Activated B cell treated with CpG ODN at 0.5 μM for 24 hours (primary cell): ENCODE measurements at regions of chr17 and their contacts with region 1.

Region 1: DNA sequence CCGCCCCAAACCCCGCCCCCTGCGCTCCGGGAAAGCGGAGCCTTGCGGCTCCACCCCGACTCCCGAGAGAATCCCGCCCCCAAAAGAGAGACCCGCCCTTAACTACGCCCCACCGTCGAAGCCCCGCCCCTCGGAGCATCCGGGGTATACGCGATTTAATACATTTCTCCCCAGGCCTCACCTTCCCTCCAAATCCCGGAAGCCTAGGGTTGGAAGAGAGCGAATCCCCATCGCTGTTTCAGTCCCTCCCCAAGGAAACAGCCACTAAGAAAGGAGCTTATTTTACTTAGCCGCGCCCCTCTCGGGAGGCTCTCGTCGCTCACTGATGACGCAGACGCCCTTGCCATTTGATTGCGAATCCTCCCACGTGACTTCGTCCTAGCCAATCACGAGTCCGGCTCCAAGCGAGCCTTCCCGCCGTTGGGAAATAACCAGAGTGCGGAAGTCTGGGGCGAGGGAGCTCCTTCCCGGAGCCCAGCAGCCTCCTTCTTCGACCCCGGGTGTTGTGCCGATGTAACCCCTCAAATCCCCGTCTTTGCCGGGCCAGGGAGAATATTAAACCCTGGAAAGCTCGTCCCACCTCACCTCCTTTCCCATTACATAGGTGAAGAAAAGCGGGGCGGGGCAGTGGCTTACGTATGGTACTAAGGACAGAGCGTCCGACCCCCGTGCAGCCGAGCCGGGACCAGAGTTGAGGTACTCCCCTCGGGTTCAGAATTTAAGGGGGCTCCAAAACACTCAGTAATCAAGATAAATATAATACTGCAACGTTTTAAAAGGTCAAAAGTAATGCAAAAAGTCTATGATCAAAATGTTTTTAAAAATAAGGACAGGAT is 462 bp upstream of the FDXR start:
- DNase-seq: peak; percentile 94
- ATAC-seq: peak; percentile 93
- H3K4me3 Mint-ChIP-seq: peak overlapping the region; percentile 94
- H3K27ac Mint-ChIP-seq: peak overlapping the region; percentile 94
- H3K4me1 Mint-ChIP-seq: peaks cover 22% of the 10 kb centered on the region
- H3K27me3 Mint-ChIP-seq: no peaks in the 10 kb centered on the region
- CTCF ChIP-seq: no peak

Region 2: GRCh38 chr17:74212913-74213791 is 660.1 kb before region 1 on chr17 and contains the start of gene TTYH2:
- CTCF ChIA-PET with region 1: no interaction called
- POLR2A ChIA-PET with region 1: no interaction called
- intact Hi-C with region 1: loop called (anchors 5 kb)
- DNase-seq: peak; percentile 66
- ATAC-seq: peak; percentile 77
- H3K4me3 Mint-ChIP-seq: peak within 1 kb of the TSS; percentile 86
- H3K27ac Mint-ChIP-seq: peak within 1 kb of the TSS; percentile 89
- H3K4me1 Mint-ChIP-seq: peaks cover 48% of the 10 kb centered on the region
- H3K27me3 Mint-ChIP-seq: no peaks in the 10 kb centered on the region
- CTCF ChIP-seq: no peak
- total RNA-seq, gene TTYH2: 2.9 and 3.8 TPM in 2 replicates

Region 3: GRCh38 chr17:74742153-74742515 is 131.1 kb before region 1 on chr17:
- CTCF ChIA-PET with region 1: interaction called, 3 read pairs
- POLR2A ChIA-PET with region 1: interaction called, 17 read pairs
- intact Hi-C with region 1: no loop called
- DNase-seq: no peak
- ATAC-seq: peak; percentile 35
- H3K4me3 Mint-ChIP-seq: peak overlapping the region; percentile 42
- H3K27ac Mint-ChIP-seq: peak overlapping the region; percentile 73
- H3K4me1 Mint-ChIP-seq: peaks cover 80% of the 10 kb centered on the region
- H3K27me3 Mint-ChIP-seq: no peaks in the 10 kb centered on the region
- CTCF ChIP-seq: no peak

Region 4: DNA sequence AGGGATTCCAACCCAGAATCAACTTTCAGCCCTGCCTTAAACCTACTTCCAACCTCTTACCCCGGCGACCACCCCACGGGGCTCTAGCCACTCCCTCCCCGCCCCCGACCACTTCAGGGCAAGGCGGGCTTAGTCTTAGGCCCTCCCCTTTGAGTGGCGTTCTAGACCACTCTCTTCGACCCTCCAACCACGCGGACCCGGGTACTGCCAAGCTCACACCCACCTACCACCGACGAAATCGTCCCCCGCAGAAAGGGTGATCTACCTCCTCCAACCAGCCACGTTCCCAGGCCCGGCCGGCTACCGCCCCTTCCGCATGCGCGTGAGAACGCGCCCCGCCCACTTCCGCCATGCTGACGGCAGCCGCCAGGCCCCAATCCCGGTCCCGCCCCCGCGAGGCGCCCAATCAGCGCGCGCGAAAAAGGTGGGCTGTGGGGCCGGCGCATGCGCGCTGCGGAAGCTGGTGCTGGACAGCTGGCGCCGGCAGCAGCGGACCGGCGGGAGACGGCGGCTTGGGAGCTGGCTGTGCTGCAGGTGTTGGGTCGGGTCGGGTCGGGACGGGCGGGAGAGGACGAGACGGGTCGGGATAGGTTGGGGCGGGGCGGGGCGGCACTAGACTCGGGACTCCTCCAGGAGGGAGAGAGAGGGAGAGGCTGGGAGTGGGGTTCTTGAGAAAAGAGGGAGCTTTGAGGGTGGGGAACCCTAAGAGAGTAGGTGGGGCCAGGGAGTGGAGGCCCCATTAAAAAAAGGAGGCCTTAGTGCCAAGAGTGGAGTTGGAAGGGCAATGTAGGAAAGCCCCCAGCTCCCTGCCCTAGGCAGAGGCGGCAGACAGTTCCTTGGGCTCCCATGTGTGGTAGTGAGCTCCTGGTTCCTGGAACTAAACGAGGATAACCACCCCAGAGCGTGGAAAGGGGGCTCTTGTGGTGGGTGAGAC is 96.9 kb before region 1 on chr17 and contains the start of gene NAT9:
- CTCF ChIA-PET with region 1: interaction called, 5 read pairs
- POLR2A ChIA-PET with region 1: interaction called, 12 read pairs
- intact Hi-C with region 1: no loop called
- DNase-seq: peak; percentile 99
- ATAC-seq: peak; percentile 82
- H3K4me3 Mint-ChIP-seq: peak within 1 kb of the TSS; percentile 99
- H3K27ac Mint-ChIP-seq: peak within 1 kb of the TSS; percentile 89
- H3K4me1 Mint-ChIP-seq: peaks cover 61% of the 10 kb centered on the region
- H3K27me3 Mint-ChIP-seq: no peaks in the 10 kb centered on the region
- CTCF ChIP-seq: no peak
- total RNA-seq, gene NAT9: 59.4 and 79.7 TPM in 2 replicates

Region 5: DNA sequence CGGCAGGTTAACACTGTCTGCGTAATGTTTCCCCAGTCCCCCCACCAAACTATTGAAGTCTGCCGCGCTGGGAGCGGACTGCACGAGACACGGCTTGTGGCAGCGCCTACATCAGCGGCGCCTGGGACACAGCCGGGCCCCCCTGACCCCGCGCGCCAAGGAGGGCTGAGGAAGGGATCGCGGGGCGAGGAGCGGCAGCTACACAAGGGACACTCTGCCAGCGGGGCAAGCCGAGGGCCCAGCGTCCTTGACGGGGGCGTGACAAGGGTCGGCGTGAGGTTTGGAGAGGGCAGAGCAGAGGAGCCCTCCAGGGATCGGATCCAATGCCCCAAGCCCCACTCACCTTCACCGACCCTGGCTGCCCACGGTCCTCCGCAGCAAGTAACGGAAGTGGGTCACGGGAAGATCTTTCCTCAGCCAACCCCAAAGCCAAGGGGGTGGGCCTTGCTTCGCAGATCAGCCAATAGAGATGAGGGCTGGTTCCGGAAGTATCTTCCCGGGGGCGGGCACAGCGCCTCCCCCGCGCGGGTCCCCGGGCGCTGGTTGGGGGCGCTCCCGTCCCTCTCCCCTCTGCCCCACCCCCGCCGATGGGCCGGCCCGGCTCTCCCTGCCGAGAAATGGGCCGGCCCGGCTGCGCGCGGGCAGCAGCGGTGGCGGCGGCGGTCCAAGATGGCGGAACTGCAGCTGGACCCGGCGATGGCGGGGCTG is 173.5 kb after region 1 on chr17 and contains the starts of genes ATP5PD and KCTD2:
- CTCF ChIA-PET with region 1: no interaction called
- POLR2A ChIA-PET with region 1: interaction called, 4 read pairs
- intact Hi-C with region 1: loop called (anchors 2 kb)
- DNase-seq: peak; percentile 91
- ATAC-seq: peak; percentile 95
- H3K4me3 Mint-ChIP-seq: peak within 1 kb of the TSS; percentile 97
- H3K27ac Mint-ChIP-seq: peak within 1 kb of the TSS; percentile 86
- H3K4me1 Mint-ChIP-seq: peaks cover 37% of the 10 kb centered on the region
- H3K27me3 Mint-ChIP-seq: no peaks in the 10 kb centered on the region
- CTCF ChIP-seq: no peak
- total RNA-seq, gene ATP5PD: 158 and 181 TPM in 2 replicates
- total RNA-seq, gene KCTD2: 19.5 and 20.2 TPM in 2 replicates

Region 6: DNA sequence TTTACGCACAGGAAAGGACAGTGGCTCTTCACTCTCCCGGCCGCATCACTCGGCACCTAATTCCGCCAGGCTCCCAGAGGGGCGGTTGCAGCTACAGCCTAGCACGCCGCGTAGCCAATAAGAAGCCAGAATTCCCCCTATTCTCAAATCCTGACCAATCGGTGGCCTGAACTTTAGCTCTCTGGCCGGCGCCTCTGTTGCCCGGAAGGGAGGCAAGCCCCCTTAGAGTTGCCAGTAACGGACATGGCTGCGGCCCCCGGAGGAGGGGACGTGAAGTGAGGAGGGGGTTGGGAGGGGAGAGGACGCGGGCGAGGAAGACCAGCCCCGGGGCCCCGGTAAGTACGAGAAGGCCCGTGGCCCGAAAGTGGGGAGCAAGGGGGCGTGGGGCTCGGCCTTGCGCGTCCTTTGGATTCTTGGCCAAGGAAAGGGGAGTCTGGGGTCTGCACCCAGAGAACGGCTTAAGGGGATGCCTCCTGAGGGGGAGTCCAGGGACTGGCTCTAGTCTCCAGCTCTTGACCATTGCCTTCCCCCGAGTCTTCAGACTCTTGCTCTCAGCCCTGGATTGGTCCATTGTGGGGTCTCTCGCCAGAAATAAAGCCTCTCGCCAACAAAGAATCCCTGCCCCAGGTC is 583.3 kb after region 1 on chr17 and contains the start of gene TMEM94:
- CTCF ChIA-PET with region 1: no interaction called
- POLR2A ChIA-PET with region 1: interaction called, 5 read pairs
- intact Hi-C with region 1: loop called (anchors 1 kb)
- DNase-seq: peak; percentile 74
- ATAC-seq: peak; percentile 94
- H3K4me3 Mint-ChIP-seq: peak within 1 kb of the TSS; percentile 91
- H3K27ac Mint-ChIP-seq: peak within 1 kb of the TSS; percentile 88
- H3K4me1 Mint-ChIP-seq: peaks cover 41% of the 10 kb centered on the region
- H3K27me3 Mint-ChIP-seq: no peaks in the 10 kb centered on the region
- CTCF ChIP-seq: no peak
- total RNA-seq, gene TMEM94: 80.3 and 86.6 TPM in 2 replicates